A673 (cell line): ENCODE measurements at regions of chr10 and their contacts with region 1.

Region 1: GRCh38 chr10:131786756-131787605 is 113.8 kb upstream of the PPP2R2D start:
- DNase-seq: peak; percentile 51
- H3K4me3 ChIP-seq: no peak overlapping the region
- H3K27ac ChIP-seq: no peak overlapping the region
- H3K4me1 ChIP-seq: no peaks in the 10 kb centered on the region
- H3K27me3 ChIP-seq: no peaks in the 10 kb centered on the region
- CTCF ChIP-seq: peak; percentile 90

Region 2: GRCh38 chr10:130341356-130341755 is 1445.6 kb before region 1 on chr10:
- CTCF ChIA-PET with region 1: no interaction called
- POLR2A ChIA-PET with region 1: no interaction called
- intact Hi-C with region 1: loop called (anchors 10 kb)
- DNase-seq: peak; percentile 46
- H3K4me3 ChIP-seq: no peak overlapping the region
- H3K27ac ChIP-seq: no peak overlapping the region
- H3K4me1 ChIP-seq: no peaks in the 10 kb centered on the region
- H3K27me3 ChIP-seq: no peaks in the 10 kb centered on the region
- CTCF ChIP-seq: peak; percentile 82

Region 3: DNA sequence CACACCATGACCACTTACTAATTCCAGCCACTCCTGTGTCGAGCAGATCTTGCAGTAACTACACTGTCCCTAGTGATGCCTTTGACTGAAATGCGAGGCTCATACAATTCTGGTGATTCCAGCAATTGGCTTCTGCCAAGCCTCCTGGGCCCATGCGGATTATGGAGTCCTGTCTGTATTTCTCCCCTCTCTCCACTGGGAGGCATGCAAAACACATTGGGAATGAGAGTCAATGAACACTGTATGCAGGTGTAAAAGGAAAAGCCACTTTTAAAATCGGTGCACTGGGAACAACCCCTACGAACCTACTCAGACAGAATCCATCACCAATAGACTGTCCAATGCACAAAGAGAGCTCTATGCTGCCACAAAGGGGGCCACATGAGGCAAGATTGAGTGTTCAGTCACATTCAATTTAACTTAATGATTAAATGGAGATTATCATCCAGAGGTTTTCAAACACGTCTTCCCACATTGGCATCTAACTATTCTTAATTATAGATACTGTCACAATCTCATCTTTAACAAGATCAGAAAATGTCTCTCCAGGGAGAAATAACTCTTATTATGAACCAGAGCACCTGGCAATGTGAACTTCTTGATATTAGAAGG is 1100.2 kb before region 1 on chr10:
- CTCF ChIA-PET with region 1: no interaction called
- POLR2A ChIA-PET with region 1: no interaction called
- intact Hi-C with region 1: loop called (anchors 5 kb)
- DNase-seq: peak; percentile 75
- H3K4me3 ChIP-seq: no peak overlapping the region
- H3K27ac ChIP-seq: no peak overlapping the region
- H3K4me1 ChIP-seq: no peaks in the 10 kb centered on the region
- H3K27me3 ChIP-seq: no peaks in the 10 kb centered on the region
- CTCF ChIP-seq: peak; percentile 70

Region 4: DNA sequence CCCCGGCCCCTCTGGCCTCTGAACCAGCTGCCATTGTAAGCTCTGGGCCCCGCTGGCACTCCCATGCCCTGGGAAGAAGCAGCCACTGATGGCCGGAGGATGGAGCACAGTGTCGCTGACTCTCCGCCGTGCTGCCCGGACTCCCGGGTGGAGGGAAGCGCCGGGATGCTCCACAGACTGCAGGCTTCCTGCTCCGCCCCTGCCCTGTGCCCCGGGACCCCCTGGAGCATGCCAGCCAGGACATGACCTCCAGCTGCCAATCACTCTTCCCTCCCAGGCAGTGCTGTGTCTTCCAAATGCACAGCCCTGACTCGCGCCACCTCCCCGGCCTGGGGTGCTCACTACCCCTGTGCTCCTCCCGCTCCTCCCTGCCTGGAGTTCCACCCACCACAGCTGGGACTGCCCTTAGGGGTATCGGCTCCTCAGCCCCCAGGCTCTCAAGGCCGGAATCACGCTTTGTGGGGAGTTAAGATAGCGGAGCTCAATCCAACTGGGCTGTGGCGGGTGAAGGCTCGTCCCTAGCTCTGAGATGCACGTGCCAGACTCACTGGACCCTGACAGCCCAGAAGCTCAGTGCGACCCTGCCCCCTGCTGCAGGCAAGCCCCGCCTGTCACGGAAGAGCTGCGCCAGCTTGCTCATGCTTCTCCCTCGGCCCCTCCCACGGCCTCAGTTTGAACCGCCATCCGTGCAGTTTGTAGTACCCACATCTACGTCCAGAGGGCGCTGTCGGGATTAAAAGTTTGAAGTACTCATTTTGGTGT is 333.2 kb before region 1 on chr10:
- CTCF ChIA-PET with region 1: no interaction called
- POLR2A ChIA-PET with region 1: no interaction called
- intact Hi-C with region 1: loop called (anchors 10 kb)
- DNase-seq: peak; percentile 81
- H3K4me3 ChIP-seq: no peak overlapping the region
- H3K27ac ChIP-seq: no peak overlapping the region
- H3K4me1 ChIP-seq: no peaks in the 10 kb centered on the region
- H3K27me3 ChIP-seq: peaks cover 12% of the 10 kb centered on the region
- CTCF ChIP-seq: peak; percentile 83

Region 5: GRCh38 chr10:131803860-131804425 is 17.0 kb after region 1 on chr10:
- CTCF ChIA-PET with region 1: no interaction called
- POLR2A ChIA-PET with region 1: no interaction called
- intact Hi-C with region 1: no loop called
- DNase-seq: no peak
- H3K4me3 ChIP-seq: no peak overlapping the region
- H3K27ac ChIP-seq: no peak overlapping the region
- H3K4me1 ChIP-seq: no peaks in the 10 kb centered on the region
- H3K27me3 ChIP-seq: no peaks in the 10 kb centered on the region
- CTCF ChIP-seq: no peak